Mammary epithelial cell (primary cell): ENCODE measurements at regions of chr1 and their contacts with region 1.

Region 1: GRCh38 chr1:41416552-41417334 is 55.5 kb downstream of the FOXO6 start:
- DNase-seq: peak; percentile 50
- H3K4me3 ChIP-seq: no peak overlapping the region
- H3K27ac ChIP-seq: no peak overlapping the region
- H3K4me1 ChIP-seq: peaks cover 31% of the 10 kb centered on the region
- H3K27me3 ChIP-seq: no peaks in the 10 kb centered on the region
- CTCF ChIP-seq: peak; percentile 88 to 95

Region 2: GRCh38 chr1:40939320-40940059 is 477.3 kb before region 1 on chr1:
- CTCF ChIA-PET with region 1: no interaction called
- dilution Hi-C with region 1: no loop called
- in situ Hi-C with region 1: no loop called
- intact Hi-C with region 1: no loop called
- DNase-seq: no peak
- H3K4me3 ChIP-seq: no peak overlapping the region
- H3K27ac ChIP-seq: no peak overlapping the region
- H3K4me1 ChIP-seq: peaks cover 28% of the 10 kb centered on the region
- H3K27me3 ChIP-seq: no peaks in the 10 kb centered on the region
- CTCF ChIP-seq: no peak

Region 3: DNA sequence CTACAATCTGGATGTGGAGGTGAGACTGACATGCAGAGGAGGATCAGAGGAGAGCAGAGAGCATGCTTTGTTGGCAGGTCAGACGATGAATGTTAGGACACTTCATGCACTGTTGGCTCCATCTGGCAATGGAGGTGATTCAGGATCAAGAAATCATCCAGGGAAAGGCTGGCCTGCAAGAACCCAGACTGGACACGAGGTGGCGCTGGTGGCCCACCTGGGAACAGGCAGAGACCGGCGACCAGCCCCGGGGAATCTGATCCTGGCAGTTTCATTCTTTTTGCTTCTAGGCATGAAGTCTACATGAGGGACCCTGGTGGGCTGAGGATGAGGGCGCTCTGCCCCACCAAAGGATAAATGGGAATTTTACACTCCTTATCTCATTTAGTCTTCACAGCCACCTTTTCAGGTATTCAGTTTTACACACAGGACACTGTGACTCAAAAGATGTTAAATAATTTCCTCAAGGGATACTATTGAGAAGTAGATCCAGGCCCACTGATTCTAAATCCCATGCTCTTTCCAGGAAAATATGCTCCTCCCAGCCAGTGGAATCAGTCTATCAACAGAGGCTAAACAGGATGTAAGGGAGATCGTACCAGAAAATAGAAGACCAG is 148.5 kb before region 1 on chr1:
- CTCF ChIA-PET with region 1: no interaction called
- dilution Hi-C with region 1: no loop called
- in situ Hi-C with region 1: no loop called
- intact Hi-C with region 1: loop called (anchors 1 kb)
- DNase-seq: peak; percentile 50
- H3K4me3 ChIP-seq: no peak overlapping the region
- H3K27ac ChIP-seq: no peak overlapping the region
- H3K4me1 ChIP-seq: no peaks in the 10 kb centered on the region
- H3K27me3 ChIP-seq: no peaks in the 10 kb centered on the region
- CTCF ChIP-seq: peak; percentile 94 to 98

Region 4: GRCh38 chr1:41322835-41323627 is 93.7 kb before region 1 on chr1:
- CTCF ChIA-PET with region 1: interaction called, 14 read pairs
- dilution Hi-C with region 1: no loop called
- in situ Hi-C with region 1: no loop called
- intact Hi-C with region 1: loop called (anchors 1 kb)
- DNase-seq: peak; percentile 68
- H3K4me3 ChIP-seq: no peak overlapping the region
- H3K27ac ChIP-seq: no peak overlapping the region
- H3K4me1 ChIP-seq: peaks cover 11% of the 10 kb centered on the region
- H3K27me3 ChIP-seq: no peaks in the 10 kb centered on the region
- CTCF ChIP-seq: peak; percentile 49 to 67

Region 5: GRCh38 chr1:41360993-41361753 is 55.6 kb before region 1 on chr1 and contains the start of gene FOXO6:
- CTCF ChIA-PET with region 1: interaction called, 12 read pairs
- dilution Hi-C with region 1: no loop called
- in situ Hi-C with region 1: no loop called
- intact Hi-C with region 1: loop called (anchors 5 kb)
- DNase-seq: peak; percentile 95
- H3K4me3 ChIP-seq: peak within 1 kb of the TSS in 2 of 3 experiments; percentile 46 to 54
- H3K27ac ChIP-seq: peak within 1 kb of the TSS; percentile 45
- H3K4me1 ChIP-seq: peaks cover 42% of the 10 kb centered on the region
- H3K27me3 ChIP-seq: peaks cover 12% of the 10 kb centered on the region
- CTCF ChIP-seq: peak in 1 of 2 donors; percentile 22
- total RNA-seq, gene FOXO6: 0.28 to 0.67 TPM

Region 6: GRCh38 chr1:41432481-41433280 is 15.9 kb after region 1 on chr1:
- CTCF ChIA-PET with region 1: interaction called, 3 read pairs
- dilution Hi-C with region 1: no loop called
- in situ Hi-C with region 1: no loop called
- intact Hi-C with region 1: loop called (anchors 1 kb)
- DNase-seq: peak; percentile 93
- H3K4me3 ChIP-seq: peak overlapping the region in 1 of 3 experiments; percentile 18
- H3K27ac ChIP-seq: peak overlapping the region; percentile 37
- H3K4me1 ChIP-seq: peaks cover 21% of the 10 kb centered on the region
- H3K27me3 ChIP-seq: no peaks in the 10 kb centered on the region
- CTCF ChIP-seq: peak; percentile 93 to 95